ENCODE measurements at regions of chr9 and their contacts with region 1.

Region 1: DNA sequence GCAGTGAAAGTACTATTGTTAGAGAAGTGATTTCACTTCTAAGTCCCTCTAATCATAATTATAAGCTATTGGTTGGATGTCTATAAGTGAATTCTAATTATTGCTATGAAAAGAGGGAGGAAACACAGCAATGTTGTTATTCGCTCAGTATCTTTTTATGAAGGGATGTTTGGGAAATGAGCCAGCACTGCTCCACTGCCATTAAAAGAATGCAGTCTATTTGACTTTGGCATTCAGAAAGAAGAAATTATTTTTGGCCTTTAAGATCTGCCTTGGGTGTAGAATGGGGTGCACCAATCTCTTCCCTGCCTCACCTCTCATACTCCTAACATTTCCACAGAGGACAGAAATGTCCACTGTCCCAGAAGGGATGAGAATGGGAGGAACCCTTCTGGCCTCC is 332.0 kb downstream of the SPATA31D1 start:
- DNase-seq: no peak
- ATAC-seq: no peak

Region 2: DNA sequence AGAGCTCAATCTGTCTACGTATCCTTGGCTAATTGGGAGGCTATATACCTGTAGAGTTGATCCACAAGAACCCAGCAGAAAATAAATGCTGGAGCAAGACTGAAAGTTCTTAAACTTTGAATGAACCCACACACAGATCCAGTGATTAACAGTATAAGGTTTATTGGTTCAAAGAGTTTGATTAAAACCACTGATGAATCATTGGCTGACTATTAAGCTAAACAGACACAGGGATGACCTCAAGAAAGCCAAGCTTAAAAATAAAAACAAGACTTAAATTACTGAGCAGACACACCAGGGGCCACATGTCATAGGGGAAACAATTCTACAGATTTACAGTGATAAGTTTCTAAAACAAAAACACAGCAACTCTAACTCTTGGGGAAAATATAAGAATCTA is 168.4 kb before region 1 on chr9:
- intact Hi-C with region 1: loop called (anchors 5 kb)
- DNase-seq: no peak
- ATAC-seq: no peak